OCI-LY7 (cell line): ENCODE measurements at regions of chr1 and their contacts with region 1.

Region 1: DNA sequence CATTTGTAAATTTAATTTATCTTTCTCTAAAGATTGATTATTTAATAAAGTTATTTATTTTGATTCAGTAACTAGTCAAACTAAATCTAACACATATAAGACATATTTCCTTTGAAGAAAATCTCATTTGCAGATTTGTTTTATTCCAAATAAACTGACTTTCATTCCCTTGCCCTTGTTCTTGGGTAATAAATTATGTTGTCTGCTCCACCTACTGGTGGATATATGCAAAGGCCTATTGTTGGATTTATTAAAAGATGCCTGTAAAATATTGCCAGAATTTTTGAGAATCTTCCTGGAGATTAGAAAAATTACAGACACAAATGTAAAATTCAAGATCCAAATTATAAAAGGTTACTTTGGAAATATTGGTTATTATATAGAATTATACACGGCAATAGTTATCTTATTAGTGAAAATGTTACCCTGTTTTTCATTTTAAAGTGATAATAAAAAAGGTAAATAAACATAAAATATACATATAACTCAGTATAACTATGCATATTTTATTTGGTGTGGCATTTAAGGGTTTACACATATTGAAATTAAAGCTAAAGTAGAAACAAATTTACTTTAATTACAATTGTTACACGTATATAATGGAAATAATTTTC is 116.1 kb downstream of the SPATA17 start:
- DNase-seq: peak; percentile 48
- H3K4me3 ChIP-seq: no peak overlapping the region
- H3K27ac ChIP-seq: no peak overlapping the region
- H3K4me1 ChIP-seq: no peaks in the 10 kb centered on the region
- CTCF ChIP-seq: peak; percentile 95

Region 2: GRCh38 chr1:217425422-217425821 is 321.8 kb before region 1 on chr1:
- CTCF ChIA-PET with region 1: no interaction called
- POLR2A ChIA-PET with region 1: no interaction called
- intact Hi-C with region 1: loop called (anchors 10 kb)
- DNase-seq: no peak
- H3K4me3 ChIP-seq: no peak overlapping the region
- H3K27ac ChIP-seq: no peak overlapping the region
- H3K4me1 ChIP-seq: no peaks in the 10 kb centered on the region
- CTCF ChIP-seq: no peak

Region 3: DNA sequence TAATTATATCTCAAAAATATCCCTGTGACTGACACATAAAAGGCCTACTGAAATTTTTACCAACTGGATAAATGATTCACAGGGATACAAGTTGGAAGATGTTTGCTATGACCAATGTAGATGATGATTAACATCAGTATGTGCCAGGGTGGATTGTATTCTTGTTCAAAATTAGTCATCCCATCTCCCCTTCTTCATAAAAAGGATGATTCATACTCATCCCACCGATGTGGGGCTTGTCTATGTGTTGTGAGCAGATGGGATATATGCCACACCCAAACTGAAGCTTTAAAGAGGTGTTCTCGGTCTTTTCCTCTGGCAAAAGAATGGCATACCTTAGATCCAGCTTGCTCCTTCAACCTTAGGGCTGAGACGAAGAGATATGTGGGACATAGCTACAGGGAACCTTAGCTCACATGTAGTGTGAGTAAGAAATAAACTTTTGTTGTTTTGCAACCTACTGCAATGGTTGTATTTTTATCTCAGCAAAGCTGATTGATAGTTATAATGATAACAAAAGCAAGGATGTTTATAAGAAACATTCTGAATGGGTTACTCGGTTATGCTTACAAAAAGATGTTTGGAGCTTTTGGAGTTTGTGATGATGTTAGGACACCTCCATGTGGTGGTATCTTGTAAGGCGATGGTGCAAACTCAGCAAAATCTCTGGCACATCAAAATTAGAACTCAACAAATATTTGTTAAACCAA is 86.8 kb before region 1 on chr1:
- CTCF ChIA-PET with region 1: no interaction called
- POLR2A ChIA-PET with region 1: no interaction called
- intact Hi-C with region 1: no loop called
- DNase-seq: peak; percentile 10
- H3K4me3 ChIP-seq: no peak overlapping the region
- H3K27ac ChIP-seq: no peak overlapping the region
- H3K4me1 ChIP-seq: no peaks in the 10 kb centered on the region
- CTCF ChIP-seq: peak; percentile 70